MCF 10A (cell line): ENCODE measurements at regions of chr1 and their contacts with region 1.

Region 1: DNA sequence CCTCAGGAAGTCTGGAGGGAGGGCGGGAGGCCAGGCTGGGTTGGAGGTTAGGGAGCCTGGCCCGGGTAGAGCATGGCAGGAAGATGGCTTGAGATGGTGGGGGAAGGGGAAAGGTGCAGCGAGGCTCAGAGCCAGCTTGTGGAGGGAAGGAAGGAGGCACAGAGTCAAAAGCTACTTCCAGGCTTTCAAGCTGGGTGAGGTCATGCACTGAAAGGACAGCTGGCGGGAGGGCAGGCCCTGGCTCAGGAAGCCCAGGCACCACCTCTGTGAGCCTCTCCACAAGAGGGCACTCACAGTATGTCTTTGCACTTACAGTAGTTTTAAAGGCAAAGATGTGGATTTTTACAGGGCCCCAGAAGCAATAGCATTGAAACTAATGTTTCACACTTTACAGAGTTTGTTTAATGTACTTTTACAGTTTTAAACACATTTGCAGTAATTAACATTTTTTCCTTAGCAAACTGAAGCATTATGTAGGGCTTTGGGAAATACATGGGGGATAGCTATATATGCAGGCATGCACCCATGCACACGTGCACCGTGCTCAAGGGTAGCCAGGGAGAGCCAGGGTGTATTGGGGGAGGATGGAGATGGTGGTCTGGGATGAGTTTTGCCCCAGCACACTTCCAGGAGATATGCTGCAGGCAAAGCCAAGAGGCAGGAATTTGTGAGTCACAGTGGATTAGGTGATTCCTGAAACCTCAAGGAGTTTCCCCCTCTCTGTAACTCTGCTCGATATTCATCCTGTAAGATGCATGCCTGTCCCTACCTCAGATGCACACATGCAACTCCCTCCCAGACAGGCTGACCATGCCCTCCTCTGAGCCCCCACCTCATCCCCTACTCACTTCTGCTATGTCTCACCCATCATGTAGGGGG is 6.1 kb upstream of the ADAM15 start:
- DNase-seq: peak; percentile 90
- H3K4me3 Mint-ChIP-seq: no peak overlapping the region
- H3K27ac Mint-ChIP-seq: no peak overlapping the region
- H3K4me1 Mint-ChIP-seq: peaks cover 37% of the 10 kb centered on the region
- H3K27me3 Mint-ChIP-seq: no peaks in the 10 kb centered on the region
- CTCF ChIP-seq: peak; percentile 83

Region 2: DNA sequence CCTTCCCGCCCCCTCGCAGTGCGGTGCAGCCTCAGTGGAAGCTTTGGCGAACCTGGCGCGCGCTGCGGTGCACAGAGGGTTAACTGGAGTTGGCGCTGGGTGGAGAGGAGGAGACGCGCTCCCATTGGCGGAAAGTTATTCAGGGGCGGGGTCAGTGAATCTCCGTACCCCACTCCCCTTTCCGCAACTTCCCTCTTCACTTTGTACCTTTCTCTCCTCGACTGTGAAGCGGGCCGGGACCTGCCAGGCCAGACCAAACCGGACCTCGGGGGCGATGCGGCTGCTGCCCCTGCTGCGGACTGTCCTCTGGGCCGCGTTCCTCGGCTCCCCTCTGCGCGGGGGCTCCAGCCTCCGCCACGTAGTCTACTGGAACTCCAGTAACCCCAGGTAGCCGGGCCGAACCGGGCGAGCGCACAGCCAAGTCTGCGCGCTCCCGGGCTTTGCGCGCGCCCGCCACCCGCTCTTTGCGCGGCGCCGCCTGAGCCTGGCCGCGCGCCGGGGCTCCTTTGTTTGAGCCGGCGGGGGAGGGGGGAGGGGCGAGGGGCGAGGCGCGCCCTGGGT is 18.6 kb after region 1 on chr1 and contains the start of gene EFNA4:
- CTCF ChIA-PET with region 1: interaction called, 231 read pairs
- POLR2A ChIA-PET with region 1: interaction called, 7 read pairs
- intact Hi-C with region 1: loop called (anchors 1 kb)
- DNase-seq: peak; percentile 96
- H3K4me3 Mint-ChIP-seq: peak within 1 kb of the TSS; percentile 81
- H3K27ac Mint-ChIP-seq: peak within 1 kb of the TSS; percentile 3
- H3K4me1 Mint-ChIP-seq: peaks cover 31% of the 10 kb centered on the region
- H3K27me3 Mint-ChIP-seq: no peaks in the 10 kb centered on the region
- CTCF ChIP-seq: no peak
- total RNA-seq, gene EFNA4: 7.4 and 9.5 TPM in 2 replicates

Region 3: DNA sequence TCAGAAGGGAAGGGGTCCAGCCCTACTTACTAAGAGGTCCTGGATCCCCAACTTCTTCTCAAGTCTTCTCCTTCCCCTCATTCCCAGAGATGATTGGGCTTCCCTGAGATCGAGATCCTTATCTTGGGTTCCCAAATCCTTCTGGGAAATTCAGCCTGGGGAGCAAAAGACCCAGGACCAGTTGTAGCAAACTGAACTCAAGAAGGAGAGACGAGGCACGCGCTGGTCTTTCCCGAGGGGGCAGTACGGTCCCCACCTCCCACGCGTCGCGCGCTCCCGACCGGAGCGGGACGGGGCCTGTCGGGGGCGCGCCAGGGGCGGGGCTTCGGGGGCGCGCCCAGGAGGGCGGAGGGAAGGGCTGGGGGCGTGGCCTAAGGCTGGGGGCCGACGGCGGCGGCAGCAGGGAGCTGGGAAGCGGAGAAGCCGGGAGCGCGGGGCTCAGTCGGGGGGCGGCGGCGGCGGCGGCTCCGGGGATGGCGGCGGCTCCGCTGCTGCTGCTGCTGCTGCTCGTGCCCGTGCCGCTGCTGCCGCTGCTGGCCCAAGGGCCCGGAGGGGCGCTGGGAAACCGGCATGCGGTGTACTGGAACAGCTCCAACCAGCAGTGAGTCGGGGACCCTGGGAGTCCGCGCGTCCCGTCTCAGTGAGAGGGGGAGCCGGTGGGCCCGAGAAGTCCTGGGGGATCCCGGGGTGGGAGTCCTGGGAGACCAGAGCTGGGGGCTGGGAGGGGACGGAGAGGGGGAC is 33.6 kb after region 1 on chr1 and contains the start of gene EFNA3:
- CTCF ChIA-PET with region 1: interaction called, 71 read pairs
- POLR2A ChIA-PET with region 1: interaction called, 4 read pairs
- intact Hi-C with region 1: no loop called
- DNase-seq: peak; percentile 75
- H3K4me3 Mint-ChIP-seq: peak within 1 kb of the TSS; percentile 77
- H3K27ac Mint-ChIP-seq: peak within 1 kb of the TSS; percentile 57
- H3K4me1 Mint-ChIP-seq: peaks cover 37% of the 10 kb centered on the region
- H3K27me3 Mint-ChIP-seq: peaks cover 30% of the 10 kb centered on the region
- CTCF ChIP-seq: no peak
- total RNA-seq, gene EFNA3: 1.6 and 1.7 TPM in 2 replicates